ENCODE measurements at regions of chrX and their contacts with region 1.

Region 1: DNA sequence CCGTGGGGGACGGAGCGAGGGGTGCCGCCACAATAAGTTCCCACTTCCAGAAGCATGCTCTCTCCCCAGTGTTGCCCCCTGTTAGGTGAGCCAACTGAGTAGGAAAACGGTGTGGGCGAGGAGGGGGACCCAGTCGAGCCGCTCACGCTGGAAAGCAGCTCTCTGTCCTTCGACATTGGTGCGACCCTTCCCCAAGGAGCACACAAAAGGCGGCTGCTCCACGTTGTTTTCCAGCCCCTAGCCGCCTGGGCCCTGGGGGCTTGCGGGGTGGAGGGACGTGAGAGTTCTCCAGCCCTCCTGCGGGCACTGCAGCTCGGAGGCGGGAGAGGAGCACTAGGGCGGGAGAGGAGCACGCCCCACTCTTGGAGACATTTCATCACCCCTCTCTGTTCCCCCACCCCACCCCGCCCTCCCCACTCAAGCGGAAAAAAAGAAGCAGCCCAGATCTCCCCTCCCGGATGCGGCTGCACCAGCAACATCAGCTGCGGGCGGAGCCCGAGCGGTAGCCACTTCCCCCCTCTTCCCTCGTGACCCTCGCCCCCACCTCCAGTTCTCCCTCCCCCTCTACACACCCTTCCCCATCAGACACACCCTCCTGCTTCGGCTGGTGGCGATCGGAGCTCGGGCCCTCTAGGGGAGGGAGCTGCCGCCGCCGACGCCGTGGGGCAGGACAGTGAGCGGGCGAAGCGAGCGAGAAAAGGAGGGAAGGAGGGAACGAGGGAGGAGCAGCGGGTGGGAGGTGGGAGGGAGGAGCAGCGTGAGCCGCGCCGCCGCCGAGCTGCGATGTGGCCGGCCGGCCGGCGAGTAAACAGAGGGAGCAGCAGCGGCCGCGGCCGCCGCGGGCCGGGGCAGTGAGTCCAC is at the start of gene DOCK11:
- DNase-seq: peak; percentile 52 to 80
- H3K4me3 ChIP-seq: peak within 1 kb of the TSS; percentile 76
- H3K27ac ChIP-seq: no peak within 1 kb of the TSS
- H3K4me1 ChIP-seq: peaks cover 14% of the 10 kb centered on the region
- H3K27me3 ChIP-seq: no peaks in the 10 kb centered on the region
- CTCF ChIP-seq: no peak
- total RNA-seq, gene DOCK11: 9.0 and 11.1 TPM in 2 replicates

Region 2: DNA sequence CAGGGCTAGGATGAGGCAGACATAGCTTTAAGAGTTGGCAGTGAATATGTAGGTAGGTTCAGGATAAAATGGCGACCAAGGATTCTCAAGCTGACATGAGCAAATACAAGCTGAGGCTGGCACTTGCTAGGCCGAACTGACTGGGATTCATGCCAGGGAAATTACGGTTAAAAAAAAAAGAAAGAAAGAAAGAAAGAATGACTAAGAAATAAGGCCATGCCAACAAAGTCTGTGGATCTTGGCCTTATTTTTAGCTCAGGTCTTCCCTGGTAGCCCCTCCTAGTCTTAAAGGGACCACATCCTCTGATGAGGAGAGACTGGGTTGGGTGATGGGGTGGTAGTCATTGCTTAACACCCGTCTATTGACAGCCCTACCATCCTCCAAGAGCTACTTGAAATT is 314.3 kb before region 1 on chrX:
- CTCF ChIA-PET with region 1: no interaction called
- POLR2A ChIA-PET with region 1: no interaction called
- intact Hi-C with region 1: no loop called
- DNase-seq: no peak
- H3K4me3 ChIP-seq: no peak overlapping the region
- H3K27ac ChIP-seq: no peak overlapping the region
- H3K4me1 ChIP-seq: no peaks in the 10 kb centered on the region
- H3K27me3 ChIP-seq: no peaks in the 10 kb centered on the region
- CTCF ChIP-seq: no peak

Region 3: DNA sequence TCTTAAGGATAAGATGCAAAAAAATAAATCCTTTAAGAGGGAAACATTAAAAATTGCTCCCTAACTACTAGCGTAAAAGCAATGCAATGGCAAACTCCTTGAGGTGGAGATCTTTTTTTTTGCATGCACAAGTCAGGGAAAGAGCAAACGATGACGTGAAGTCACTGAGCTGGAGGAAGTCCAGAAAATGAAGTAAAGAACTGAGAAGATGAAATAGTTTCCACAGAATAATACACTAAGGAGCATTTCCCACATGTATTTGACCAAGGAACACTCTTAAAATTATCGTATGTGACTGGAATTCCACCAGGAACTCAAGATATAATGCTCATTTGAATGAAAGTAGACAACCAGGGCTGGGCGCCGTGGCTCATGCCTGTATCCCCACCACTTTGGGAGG is 20.7 kb before region 1 on chrX:
- CTCF ChIA-PET with region 1: no interaction called
- POLR2A ChIA-PET with region 1: interaction called, 11 read pairs
- intact Hi-C with region 1: no loop called
- DNase-seq: no peak
- H3K4me3 ChIP-seq: no peak overlapping the region
- H3K27ac ChIP-seq: no peak overlapping the region
- H3K4me1 ChIP-seq: peaks cover 15% of the 10 kb centered on the region; the same call in 1 of the 2 replicates
- H3K27me3 ChIP-seq: no peaks in the 10 kb centered on the region
- CTCF ChIP-seq: no peak

Region 4: GRCh38 chrX:118508635-118509034 is 13.3 kb after region 1 on chrX:
- CTCF ChIA-PET with region 1: no interaction called
- POLR2A ChIA-PET with region 1: no interaction called
- intact Hi-C with region 1: no loop called
- DNase-seq: no peak
- H3K4me3 ChIP-seq: no peak overlapping the region
- H3K27ac ChIP-seq: no peak overlapping the region
- H3K4me1 ChIP-seq: no peaks in the 10 kb centered on the region
- H3K27me3 ChIP-seq: no peaks in the 10 kb centered on the region
- CTCF ChIP-seq: no peak

Region 5: GRCh38 chrX:118536687-118537461 is 41.6 kb after region 1 on chrX:
- CTCF ChIA-PET with region 1: no interaction called
- POLR2A ChIA-PET with region 1: no interaction called
- intact Hi-C with region 1: loop called (anchors 5 kb)
- DNase-seq: peak; percentile 8 to 51
- H3K4me3 ChIP-seq: no peak overlapping the region
- H3K27ac ChIP-seq: no peak overlapping the region
- H3K4me1 ChIP-seq: peaks cover 11% of the 10 kb centered on the region
- H3K27me3 ChIP-seq: no peaks in the 10 kb centered on the region
- CTCF ChIP-seq: peak; percentile 48; the same call in 1 of the 2 replicates

Region 6: DNA sequence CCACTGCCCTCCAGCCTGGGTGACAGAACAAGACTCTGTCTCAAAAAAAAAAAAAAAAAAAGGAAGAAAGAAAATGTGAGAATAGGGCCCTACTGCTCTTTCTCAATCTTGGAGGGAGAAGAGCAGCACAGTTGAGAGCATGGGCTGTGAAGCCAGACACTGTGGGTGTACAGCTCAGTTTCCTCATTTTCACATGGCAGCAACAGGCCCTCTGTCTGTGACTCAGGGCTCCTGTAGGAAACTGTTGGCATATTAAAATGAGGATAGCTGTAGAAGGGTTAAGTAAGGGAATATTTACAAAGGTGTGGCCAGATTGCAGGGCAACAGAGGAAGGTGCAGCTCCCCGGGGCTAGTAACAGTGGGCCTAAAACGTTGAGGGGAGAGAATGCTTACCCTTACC is 1403.8 kb after region 1 on chrX:
- CTCF ChIA-PET with region 1: interaction called, 10 read pairs
- POLR2A ChIA-PET with region 1: no interaction called
- intact Hi-C with region 1: no loop called
- DNase-seq: no peak
- H3K4me3 ChIP-seq: no peak overlapping the region
- H3K27ac ChIP-seq: no peak overlapping the region
- H3K4me1 ChIP-seq: 0 out of 2 replicates have a peak, but pooled peaks cover 4% of the 10 kb centered on the region
- H3K27me3 ChIP-seq: no peaks in the 10 kb centered on the region
- CTCF ChIP-seq: no peak